ENCODE measurements at regions of chr14 and their contacts with region 1.

Region 1: DNA sequence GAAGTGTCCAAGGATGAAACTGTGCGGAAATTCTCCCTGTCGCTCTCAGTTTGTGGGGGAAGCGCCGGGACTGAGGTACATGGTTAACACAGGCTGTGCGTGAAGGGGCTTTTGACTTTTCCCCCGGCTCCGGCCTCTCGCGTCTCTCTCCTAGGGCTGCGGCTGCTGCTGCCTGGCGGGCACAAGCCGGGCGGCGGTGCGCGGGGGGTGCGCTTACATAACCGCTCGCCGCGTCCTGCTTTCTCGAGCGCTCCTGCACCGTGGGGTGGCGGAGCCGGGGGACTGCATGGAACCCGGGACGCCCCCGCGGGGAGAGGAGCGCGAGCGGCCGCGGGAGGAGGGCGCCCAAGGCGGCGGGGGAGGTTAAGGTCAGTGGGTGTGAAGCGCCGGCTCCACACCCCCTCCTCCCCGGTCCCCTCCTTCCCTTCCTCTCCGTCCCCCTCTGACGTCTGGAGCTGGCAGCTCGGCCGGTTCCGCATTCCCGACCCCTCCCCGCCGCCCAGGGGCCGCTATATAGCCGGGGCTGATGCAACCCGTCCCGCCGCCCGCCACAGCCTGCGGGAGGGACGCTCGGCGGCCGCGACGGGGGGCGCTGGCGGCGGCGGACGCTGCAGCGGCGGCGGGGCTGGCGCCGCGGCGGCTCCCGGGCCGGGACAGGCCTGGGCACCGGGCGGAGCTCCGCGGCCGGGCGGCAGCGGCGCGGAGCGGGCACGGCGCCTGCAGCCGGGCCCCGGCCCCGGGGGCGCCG is at the start of gene JDP2:
- DNase-seq: peak; percentile 69 to 97 (median 81)

Region 2: GRCh38 chr14:75307700-75308379 is 119.8 kb before region 1 on chr14:
- intact Hi-C with region 1: loop called (anchors 5 kb)
- DNase-seq: peak; percentile 74 to 98 (median 90)

Region 3: GRCh38 chr14:75467763-75468420 is 40.2 kb after region 1 on chr14:
- intact Hi-C with region 1: loop called (anchors 2 kb)
- DNase-seq: peak in 1 of 10 donors; percentile 63

Region 4: DNA sequence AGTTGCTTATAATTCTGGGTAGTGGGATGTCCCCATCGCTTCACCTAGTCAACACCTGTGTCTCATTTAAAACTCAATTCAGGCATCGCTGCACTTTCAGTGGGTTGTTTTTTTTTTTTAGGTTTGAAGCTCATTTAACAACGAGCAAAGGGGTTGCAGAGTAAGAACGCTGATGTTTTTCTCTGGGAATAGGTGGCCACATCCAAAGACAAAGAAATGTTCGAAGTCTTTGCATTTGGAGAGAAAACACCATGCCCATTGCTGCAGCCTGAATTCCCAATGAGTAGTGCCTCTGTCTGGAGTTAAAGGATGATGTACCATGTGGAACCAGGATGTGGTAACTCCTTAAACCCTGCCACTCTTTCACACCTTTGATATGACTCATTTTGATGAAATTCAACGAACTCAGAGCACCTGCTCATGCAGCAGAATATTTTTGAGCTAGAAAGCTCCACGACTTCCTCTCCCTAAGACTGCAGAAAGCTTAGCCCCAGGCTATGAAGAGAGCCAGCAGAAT is 59.6 kb after region 1 on chr14:
- intact Hi-C with region 1: loop called (anchors 5 kb)
- DNase-seq: no peak

Measured in posterior cingulate gyrus (tissue), 11 donors.